Cardiac septum (tissue), 1 donor: ENCODE measurements at regions of chr17 and their contacts with region 1.

Region 1: GRCh38 chr17:81419328-81419885 is 24.1 kb downstream of the BAHCC1 start:
- DNase-seq: peak; percentile 96

Region 2: GRCh38 chr17:81328978-81329919 is 90.2 kb before region 1 on chr17:
- intact Hi-C with region 1: loop called (anchors 5 kb)
- DNase-seq: peak; percentile 87

Region 3: DNA sequence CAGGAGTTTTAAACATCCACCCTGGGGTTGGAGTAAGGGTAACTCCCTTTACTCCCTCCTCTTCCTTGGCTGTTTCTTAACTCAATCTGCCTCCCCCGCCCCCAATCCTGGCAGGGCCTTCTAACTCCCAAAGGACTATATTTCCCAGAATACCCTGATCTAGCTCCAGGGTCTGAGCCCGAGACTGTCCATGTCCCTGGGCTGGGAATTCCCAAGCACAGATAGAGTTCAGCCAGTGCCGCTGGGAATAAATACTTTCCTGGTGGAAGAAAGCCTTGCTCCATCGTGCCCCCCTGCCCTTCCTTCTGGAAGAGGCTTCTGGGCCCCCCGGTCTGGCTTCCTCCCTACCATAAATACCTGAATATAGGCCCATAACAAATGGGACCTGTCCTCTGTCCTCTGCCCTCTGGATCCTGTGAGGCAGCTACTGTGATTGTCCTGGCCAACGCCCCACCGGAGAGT is 14.0 kb before region 1 on chr17:
- intact Hi-C with region 1: loop called (anchors 2 kb)
- DNase-seq: no peak

Region 4: GRCh38 chr17:81860756-81861518 is 441.5 kb after region 1 on chr17:
- intact Hi-C with region 1: no loop called
- DNase-seq: peak; percentile 99